ENCODE measurements at regions of chr19 and their contacts with region 1.

Region 1: GRCh38 chr19:36054119-36054732 is at the start of gene THAP8:
- DNase-seq: peak; percentile 98
- ATAC-seq: peak; percentile 80
- H3K4me3 Mint-ChIP-seq: peak within 1 kb of the TSS; percentile 91
- H3K27ac Mint-ChIP-seq: peak within 1 kb of the TSS; percentile 98
- H3K4me1 Mint-ChIP-seq: peaks cover 30% of the 10 kb centered on the region
- H3K27me3 Mint-ChIP-seq: no peaks in the 10 kb centered on the region
- CTCF ChIP-seq: no peak
- total RNA-seq, gene THAP8: 6.6 to 10.7 TPM (median 6.9 TPM) in 3 replicates

Region 2: DNA sequence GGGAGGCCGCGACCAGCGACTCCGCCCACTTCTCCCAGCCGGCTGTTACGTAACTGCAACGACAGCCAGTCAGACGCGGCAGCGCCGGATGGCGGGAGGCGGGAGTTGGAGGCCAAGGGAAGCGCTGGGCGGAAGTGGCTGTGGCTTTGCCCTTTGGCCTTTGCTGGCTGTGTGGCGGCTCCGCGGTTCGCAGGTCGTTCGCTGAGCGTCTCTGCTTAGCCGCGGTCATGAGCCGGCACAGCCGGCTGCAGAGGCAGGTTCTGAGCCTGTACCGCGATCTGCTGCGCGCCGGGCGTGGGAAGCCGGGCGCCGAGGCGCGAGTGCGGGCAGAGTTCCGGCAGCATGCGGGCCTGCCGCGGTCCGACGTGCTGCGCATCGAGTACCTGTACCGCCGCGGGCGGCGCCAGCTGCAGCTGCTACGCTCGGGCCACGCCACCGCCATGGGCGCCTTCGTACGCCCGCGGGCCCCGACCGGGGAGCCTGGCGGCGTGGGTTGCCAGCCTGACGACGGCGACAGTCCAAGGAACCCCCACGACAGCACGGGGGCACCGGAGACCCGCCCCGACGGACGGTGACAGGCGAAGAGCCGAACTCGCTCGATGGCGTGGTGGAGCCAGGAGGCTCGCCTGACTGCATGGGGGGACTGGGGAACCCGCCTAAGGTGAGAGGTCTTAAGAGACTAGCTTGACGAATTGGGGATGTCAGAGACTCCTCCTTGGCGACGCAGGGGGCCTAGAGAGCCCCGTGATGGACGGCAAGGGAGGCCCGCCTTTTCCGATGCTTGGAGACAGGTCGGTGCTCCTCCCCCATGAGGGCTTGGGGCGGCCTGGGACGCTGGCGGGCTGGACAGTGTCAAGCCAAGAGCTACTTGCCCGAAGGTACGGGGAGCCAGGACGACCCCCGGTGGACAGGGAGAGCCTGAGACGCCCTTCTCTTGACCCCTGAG is 58.9 kb before region 1 on chr19 and contains the start of gene SDHAF1:
- CTCF ChIA-PET with region 1: interaction called, 11 read pairs
- POLR2A ChIA-PET with region 1: no interaction called
- DNase-seq: peak; percentile 96
- ATAC-seq: peak; percentile 64
- H3K4me3 Mint-ChIP-seq: peak within 1 kb of the TSS; percentile 86
- H3K27ac Mint-ChIP-seq: peak within 1 kb of the TSS; percentile 94
- H3K4me1 Mint-ChIP-seq: peaks cover 14% of the 10 kb centered on the region
- H3K27me3 Mint-ChIP-seq: peaks cover 3% of the 10 kb centered on the region
- CTCF ChIP-seq: no peak
- total RNA-seq, gene SDHAF1: 19.5 to 20.8 TPM (median 20.4 TPM) in 3 replicates

Region 3: GRCh38 chr19:36009220-36009619 is 45.0 kb before region 1 on chr19:
- CTCF ChIA-PET with region 1: interaction called, 7 read pairs
- POLR2A ChIA-PET with region 1: interaction called, 18 read pairs
- DNase-seq: peak; percentile 74
- ATAC-seq: peak; percentile 10
- H3K4me3 Mint-ChIP-seq: peak overlapping the region; percentile 91
- H3K27ac Mint-ChIP-seq: peak overlapping the region; percentile 49; the same call in 1 of the 2 replicates
- H3K4me1 Mint-ChIP-seq: peaks cover 26% of the 10 kb centered on the region
- H3K27me3 Mint-ChIP-seq: peaks cover 16% of the 10 kb centered on the region
- CTCF ChIP-seq: no peak

Region 4: GRCh38 chr19:36041831-36042230 is 12.4 kb before region 1 on chr19:
- CTCF ChIA-PET with region 1: interaction called, 11 read pairs
- POLR2A ChIA-PET with region 1: interaction called, 4 read pairs
- DNase-seq: no peak
- ATAC-seq: peak; percentile 46
- H3K4me3 Mint-ChIP-seq: no peak overlapping the region
- H3K27ac Mint-ChIP-seq: no peak overlapping the region
- H3K4me1 Mint-ChIP-seq: peaks cover 12% of the 10 kb centered on the region
- H3K27me3 Mint-ChIP-seq: no peaks in the 10 kb centered on the region
- CTCF ChIP-seq: no peak

Region 5: GRCh38 chr19:36081385-36081784 is 27.2 kb after region 1 on chr19:
- CTCF ChIA-PET with region 1: no interaction called
- POLR2A ChIA-PET with region 1: no interaction called
- DNase-seq: no peak
- ATAC-seq: no peak
- H3K4me3 Mint-ChIP-seq: no peak overlapping the region
- H3K27ac Mint-ChIP-seq: no peak overlapping the region
- H3K4me1 Mint-ChIP-seq: no peaks in the 10 kb centered on the region
- H3K27me3 Mint-ChIP-seq: no peaks in the 10 kb centered on the region
- CTCF ChIP-seq: no peak

Region 6: DNA sequence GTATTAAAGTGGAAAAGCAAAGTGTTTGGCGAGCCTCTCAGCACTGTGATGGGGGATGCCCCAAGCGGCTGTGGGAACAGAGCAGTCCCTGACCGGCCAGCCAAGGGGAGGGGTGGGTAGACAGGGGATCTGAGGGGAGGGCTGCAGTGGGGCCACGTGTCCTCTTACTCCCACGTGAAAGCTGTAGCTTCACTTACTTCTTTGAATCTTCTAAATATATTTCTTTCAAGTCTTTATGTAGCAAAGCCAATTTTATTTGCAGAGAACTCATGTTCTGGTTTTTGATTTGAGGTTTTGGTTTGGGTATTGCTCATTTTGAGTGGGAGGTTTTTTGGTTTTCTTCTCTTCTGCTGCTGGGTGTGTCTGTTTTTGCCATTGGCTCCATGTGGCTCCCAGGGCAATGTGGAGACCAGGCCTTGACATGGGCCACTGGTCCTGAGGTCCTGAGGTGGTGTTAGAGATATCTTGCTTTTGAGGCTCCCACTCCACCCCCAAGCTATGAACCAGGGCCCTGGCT is 39.0 kb after region 1 on chr19:
- CTCF ChIA-PET with region 1: no interaction called
- POLR2A ChIA-PET with region 1: no interaction called
- DNase-seq: no peak
- ATAC-seq: no peak
- H3K4me3 Mint-ChIP-seq: no peak overlapping the region
- H3K27ac Mint-ChIP-seq: no peak overlapping the region
- H3K4me1 Mint-ChIP-seq: no peaks in the 10 kb centered on the region
- H3K27me3 Mint-ChIP-seq: no peaks in the 10 kb centered on the region
- CTCF ChIP-seq: no peak